PC-9 (cell line): ENCODE measurements at regions of chr2 and their contacts with region 1.

Region 1: DNA sequence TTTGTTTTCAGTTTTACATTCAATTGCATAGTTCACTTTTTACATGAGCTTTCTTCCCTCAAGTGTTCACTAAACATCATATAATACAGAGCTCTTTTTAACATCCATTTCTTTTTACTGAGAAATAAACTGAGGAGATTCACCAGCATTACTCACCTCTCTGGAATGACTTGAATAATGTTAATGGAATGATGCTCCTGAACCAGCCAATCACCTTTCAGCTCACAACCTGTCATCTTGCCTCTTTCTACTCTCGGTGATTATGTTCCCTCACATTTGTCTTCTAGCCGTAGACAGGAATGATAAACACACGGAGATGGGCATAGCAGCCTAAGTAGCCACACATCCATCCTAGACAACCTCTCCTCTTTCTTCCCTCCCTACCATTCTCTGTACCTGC is 301.7 kb downstream of the PAX3 start:
- DNase-seq: peak; percentile 71 to 89
- H3K4me3 ChIP-seq: no peak overlapping the region
- H3K27ac ChIP-seq: peak overlapping the region; percentile 13; the same call in 1 of the 2 replicates
- H3K4me1 ChIP-seq: peaks cover 45% of the 10 kb centered on the region
- H3K27me3 ChIP-seq: no peaks in the 10 kb centered on the region
- CTCF ChIP-seq: no peak

Region 2: GRCh38 chr2:221546505-221547225 is 450.4 kb before region 1 on chr2:
- CTCF ChIA-PET with region 1: interaction called, 13 read pairs
- POLR2A ChIA-PET with region 1: no interaction called
- intact Hi-C with region 1: no loop called
- DNase-seq: peak; percentile 46 to 97
- H3K4me3 ChIP-seq: no peak overlapping the region; the same call in 1 of the 2 replicates
- H3K27ac ChIP-seq: peak overlapping the region; percentile 74
- H3K4me1 ChIP-seq: peaks cover 25% of the 10 kb centered on the region
- H3K27me3 ChIP-seq: no peaks in the 10 kb centered on the region
- CTCF ChIP-seq: 0 out of 2 replicates have a peak, but pooled peaks have one; percentile 12

Region 3: GRCh38 chr2:221635949-221636348 is 361.2 kb before region 1 on chr2:
- CTCF ChIA-PET with region 1: no interaction called
- POLR2A ChIA-PET with region 1: no interaction called
- intact Hi-C with region 1: no loop called
- DNase-seq: no peak
- H3K4me3 ChIP-seq: no peak overlapping the region
- H3K27ac ChIP-seq: no peak overlapping the region
- H3K4me1 ChIP-seq: no peaks in the 10 kb centered on the region
- H3K27me3 ChIP-seq: no peaks in the 10 kb centered on the region
- CTCF ChIP-seq: peak; percentile 60; the same call in 1 of the 2 replicates

Region 4: GRCh38 chr2:221943076-221943810 is 53.9 kb before region 1 on chr2:
- CTCF ChIA-PET with region 1: interaction called, 3 read pairs
- POLR2A ChIA-PET with region 1: interaction called, 10 read pairs
- intact Hi-C with region 1: no loop called
- DNase-seq: peak; percentile 64 to 86
- H3K4me3 ChIP-seq: no peak overlapping the region
- H3K27ac ChIP-seq: peak overlapping the region; percentile 30
- H3K4me1 ChIP-seq: peaks cover 22% of the 10 kb centered on the region
- H3K27me3 ChIP-seq: no peaks in the 10 kb centered on the region
- CTCF ChIP-seq: no peak